CD8-positive, alpha-beta T cell (primary cell): ENCODE measurements at regions of chr17 and their contacts with region 1.

Region 1: GRCh38 chr17:76397687-76398487 is 13.5 kb downstream of the SPHK1 start:
- DNase-seq: peak; percentile 73 to 90 (median 84)
- ATAC-seq: peak; percentile 95
- H3K4me3 ChIP-seq: no peak overlapping the region
- H3K4me3 Mint-ChIP-seq: no peak overlapping the region
- H3K27ac ChIP-seq: no peak overlapping the region
- H3K27ac Mint-ChIP-seq: no peak overlapping the region
- H3K4me1 ChIP-seq: no peaks in the 10 kb centered on the region
- H3K4me1 Mint-ChIP-seq: no peaks in the 10 kb centered on the region
- H3K27me3 ChIP-seq: no peaks in the 10 kb centered on the region
- H3K27me3 Mint-ChIP-seq: no peaks in the 10 kb centered on the region
- CTCF ChIP-seq: peak; percentile 98

Region 2: GRCh38 chr17:76121932-76122430 is 275.9 kb before region 1 on chr17:
- CTCF ChIA-PET with region 1: interaction called, 15 read pairs
- POLR2A ChIA-PET with region 1: no interaction called
- intact Hi-C with region 1: loop called in 1 of 2 experiments (anchors 10 kb)
- DNase-seq: peak in 3 of 9 experiments; percentile 23 to 63 (median 48)
- ATAC-seq: peak; percentile 10
- H3K4me3 ChIP-seq: peak overlapping the region; percentile 47 to 49
- H3K4me3 Mint-ChIP-seq: peak overlapping the region; percentile 37
- H3K27ac ChIP-seq: peak overlapping the region in 1 of 2 experiments; percentile 27
- H3K27ac Mint-ChIP-seq: no peak overlapping the region
- H3K4me1 ChIP-seq: peaks cover 33% of the 10 kb centered on the region
- H3K4me1 Mint-ChIP-seq: peaks cover 20% of the 10 kb centered on the region
- H3K27me3 ChIP-seq: no peaks in the 10 kb centered on the region
- H3K27me3 Mint-ChIP-seq: no peaks in the 10 kb centered on the region
- CTCF ChIP-seq: no peak

Region 3: DNA sequence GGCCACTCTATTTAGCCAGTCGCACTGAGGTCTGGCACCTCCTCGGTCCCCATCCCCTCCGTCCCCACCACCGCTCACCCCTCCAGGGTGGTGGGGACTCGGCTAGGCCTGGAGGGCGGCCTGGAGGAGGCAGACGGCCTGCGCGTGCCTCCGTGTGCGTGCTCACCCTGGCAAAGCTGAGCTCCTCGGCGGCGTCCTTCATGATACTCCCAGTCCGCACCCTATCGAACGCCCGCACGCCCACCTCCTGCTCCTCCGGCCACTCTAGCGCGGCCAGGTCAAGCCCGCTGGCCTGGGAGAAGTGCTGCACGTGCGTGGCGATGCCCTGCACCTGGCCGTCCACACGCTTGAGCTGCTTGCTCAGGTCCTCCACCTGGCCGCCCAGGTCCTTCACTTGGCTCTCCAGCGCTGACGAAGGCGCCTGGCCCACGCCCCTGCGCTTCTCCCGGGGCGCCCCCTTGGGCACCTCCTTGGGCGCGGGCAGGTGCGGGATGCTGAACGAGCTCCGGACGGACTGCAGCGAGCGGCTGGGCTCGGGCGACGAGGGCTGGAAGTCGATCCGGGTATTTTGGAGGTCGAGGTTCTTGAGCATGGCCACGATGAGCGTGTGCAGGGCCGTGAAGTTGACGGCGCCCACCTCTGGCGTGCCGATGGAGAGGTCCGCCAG is 90.5 kb before region 1 on chr17:
- CTCF ChIA-PET with region 1: interaction called, 179 read pairs
- POLR2A ChIA-PET with region 1: interaction called, 6 read pairs
- intact Hi-C with region 1: loop called (anchors 1 kb)
- DNase-seq: no peak
- ATAC-seq: no peak
- H3K4me3 ChIP-seq: no peak overlapping the region
- H3K4me3 Mint-ChIP-seq: no peak overlapping the region
- H3K27ac ChIP-seq: no peak overlapping the region
- H3K27ac Mint-ChIP-seq: no peak overlapping the region
- H3K4me1 ChIP-seq: no peaks in the 10 kb centered on the region
- H3K4me1 Mint-ChIP-seq: peaks cover 1% of the 10 kb centered on the region
- H3K27me3 ChIP-seq: no peaks in the 10 kb centered on the region
- H3K27me3 Mint-ChIP-seq: no peaks in the 10 kb centered on the region
- CTCF ChIP-seq: no peak

Region 4: GRCh38 chr17:76337413-76337777 is 60.5 kb before region 1 on chr17:
- CTCF ChIA-PET with region 1: interaction called, 12 read pairs
- POLR2A ChIA-PET with region 1: no interaction called
- intact Hi-C with region 1: no loop called
- DNase-seq: no peak
- ATAC-seq: no peak
- H3K4me3 ChIP-seq: no peak overlapping the region
- H3K4me3 Mint-ChIP-seq: no peak overlapping the region
- H3K27ac ChIP-seq: no peak overlapping the region
- H3K27ac Mint-ChIP-seq: no peak overlapping the region
- H3K4me1 ChIP-seq: no peaks in the 10 kb centered on the region
- H3K4me1 Mint-ChIP-seq: peaks cover 4% of the 10 kb centered on the region
- H3K27me3 ChIP-seq: no peaks in the 10 kb centered on the region
- H3K27me3 Mint-ChIP-seq: no peaks in the 10 kb centered on the region
- CTCF ChIP-seq: no peak

Region 5: GRCh38 chr17:76365256-76365903 is 32.5 kb before region 1 on chr17:
- CTCF ChIA-PET with region 1: interaction called, 16 read pairs
- POLR2A ChIA-PET with region 1: no interaction called
- intact Hi-C with region 1: loop called in 1 of 2 experiments (anchors 2 kb)
- DNase-seq: peak in 1 of 9 experiments; percentile 14
- ATAC-seq: no peak
- H3K4me3 ChIP-seq: no peak overlapping the region
- H3K4me3 Mint-ChIP-seq: no peak overlapping the region
- H3K27ac ChIP-seq: no peak overlapping the region
- H3K27ac Mint-ChIP-seq: no peak overlapping the region
- H3K4me1 ChIP-seq: no peaks in the 10 kb centered on the region
- H3K4me1 Mint-ChIP-seq: no peaks in the 10 kb centered on the region
- H3K27me3 ChIP-seq: no peaks in the 10 kb centered on the region
- H3K27me3 Mint-ChIP-seq: no peaks in the 10 kb centered on the region
- CTCF ChIP-seq: no peak

Region 6: GRCh38 chr17:76384222-76384986 is 13.5 kb before region 1 on chr17 and contains the start of gene SPHK1:
- CTCF ChIA-PET with region 1: interaction called, 79 read pairs
- POLR2A ChIA-PET with region 1: interaction called, 9 read pairs
- intact Hi-C with region 1: no loop called
- DNase-seq: peak in 8 of 9 experiments; percentile 25 to 81 (median 57)
- ATAC-seq: peak; percentile 39
- H3K4me3 ChIP-seq: peak within 1 kb of the TSS; percentile 49 to 69
- H3K4me3 Mint-ChIP-seq: peak within 1 kb of the TSS; percentile 88
- H3K27ac ChIP-seq: peak within 1 kb of the TSS; percentile 8 to 42
- H3K27ac Mint-ChIP-seq: peak within 1 kb of the TSS; percentile 64
- H3K4me1 ChIP-seq: peaks cover 32% of the 10 kb centered on the region
- H3K4me1 Mint-ChIP-seq: peaks cover 13% of the 10 kb centered on the region
- H3K27me3 ChIP-seq: no peaks in the 10 kb centered on the region
- H3K27me3 Mint-ChIP-seq: peaks cover 2% of the 10 kb centered on the region
- CTCF ChIP-seq: no peak
- total RNA-seq, gene SPHK1: 2.0 to 2.6 TPM

Region 7: DNA sequence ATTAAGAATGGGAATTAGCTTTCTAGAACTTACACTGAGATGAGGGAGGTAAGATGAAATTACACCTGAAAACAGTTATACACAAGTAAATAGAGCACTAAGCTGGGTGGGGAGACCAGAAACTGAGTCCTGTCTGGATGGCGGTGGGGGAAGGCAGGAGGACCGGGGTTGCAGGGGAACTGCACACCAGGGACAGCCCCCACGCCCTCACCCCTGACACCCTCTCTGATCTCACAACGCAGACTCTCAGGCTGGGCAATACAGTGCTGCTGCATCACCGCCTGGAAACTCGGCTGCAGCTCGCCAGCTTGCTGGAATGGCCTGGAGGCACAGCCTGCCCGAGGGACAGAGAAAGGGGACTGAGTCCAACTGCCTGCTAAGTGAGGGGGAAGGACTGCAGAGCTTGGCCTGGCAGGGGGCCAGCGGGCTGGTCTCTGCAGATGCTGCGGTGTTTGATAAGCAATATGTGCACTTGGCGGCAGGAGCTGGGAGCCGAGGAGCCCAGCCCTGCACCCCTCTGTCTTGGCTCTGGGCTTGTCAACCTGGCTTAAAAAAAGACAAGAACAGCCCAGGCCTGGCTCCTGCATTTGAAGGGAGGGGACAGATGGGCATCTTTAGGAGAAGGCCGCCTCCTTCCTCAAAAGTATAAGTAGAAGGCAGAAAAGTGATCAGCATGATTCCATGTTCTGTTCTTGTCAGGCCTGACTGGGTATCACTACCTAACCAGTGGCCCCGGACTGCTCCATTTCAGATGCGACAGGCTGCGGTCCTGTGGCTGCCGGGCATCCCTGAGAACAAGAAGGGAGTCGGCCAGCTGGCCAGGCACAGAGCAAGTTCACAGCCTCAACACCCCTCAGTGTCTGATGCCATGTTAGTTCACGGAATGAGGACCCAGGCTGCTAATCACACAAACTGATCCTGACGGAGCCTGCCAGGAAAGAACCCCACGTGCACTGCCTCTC is 16.7 kb after region 1 on chr17:
- CTCF ChIA-PET with region 1: interaction called, 58 read pairs
- POLR2A ChIA-PET with region 1: no interaction called
- intact Hi-C with region 1: no loop called
- DNase-seq: no peak
- ATAC-seq: no peak
- H3K4me3 ChIP-seq: no peak overlapping the region
- H3K4me3 Mint-ChIP-seq: no peak overlapping the region
- H3K27ac ChIP-seq: no peak overlapping the region
- H3K27ac Mint-ChIP-seq: no peak overlapping the region
- H3K4me1 ChIP-seq: no peaks in the 10 kb centered on the region
- H3K4me1 Mint-ChIP-seq: peaks cover 5% of the 10 kb centered on the region
- H3K27me3 ChIP-seq: no peaks in the 10 kb centered on the region
- H3K27me3 Mint-ChIP-seq: no peaks in the 10 kb centered on the region
- CTCF ChIP-seq: no peak